AG04450 (cell line): ENCODE measurements at regions of chr17 and their contacts with region 1.

Region 1: DNA sequence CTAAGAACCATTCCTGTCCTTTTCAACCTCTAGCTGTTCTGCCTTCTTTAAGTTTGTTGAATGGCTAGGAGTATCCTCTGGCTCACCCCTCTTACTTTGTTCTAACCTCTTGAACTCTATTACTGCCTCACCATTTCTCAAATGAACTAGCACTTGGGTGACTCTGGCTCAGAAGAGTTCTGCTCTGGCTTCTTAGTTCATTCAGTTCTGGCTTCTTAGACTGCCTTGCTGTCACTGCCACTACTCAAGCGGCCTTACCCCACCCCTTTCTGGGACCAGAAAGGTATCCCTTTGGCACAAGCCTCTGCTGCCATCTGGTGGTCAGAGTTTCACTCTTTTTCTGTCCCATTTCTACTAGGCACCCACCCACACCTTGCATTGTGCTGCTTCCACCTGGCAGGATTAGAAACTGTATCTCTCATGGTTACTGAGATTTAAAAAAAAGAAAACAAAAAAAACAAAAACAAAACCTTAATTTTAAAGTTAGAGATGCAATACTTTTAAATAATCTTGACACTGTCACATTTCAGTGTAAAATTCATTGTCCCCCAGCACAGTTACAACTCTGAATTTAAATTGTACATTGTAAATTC is 6.8 kb upstream of the ABCA10 start:
- DNase-seq: peak; percentile 51
- H3K4me3 ChIP-seq: no peak overlapping the region
- H3K27ac ChIP-seq: no peak overlapping the region
- H3K27me3 ChIP-seq: no peaks in the 10 kb centered on the region
- CTCF ChIP-seq: peak; percentile 82

Region 2: DNA sequence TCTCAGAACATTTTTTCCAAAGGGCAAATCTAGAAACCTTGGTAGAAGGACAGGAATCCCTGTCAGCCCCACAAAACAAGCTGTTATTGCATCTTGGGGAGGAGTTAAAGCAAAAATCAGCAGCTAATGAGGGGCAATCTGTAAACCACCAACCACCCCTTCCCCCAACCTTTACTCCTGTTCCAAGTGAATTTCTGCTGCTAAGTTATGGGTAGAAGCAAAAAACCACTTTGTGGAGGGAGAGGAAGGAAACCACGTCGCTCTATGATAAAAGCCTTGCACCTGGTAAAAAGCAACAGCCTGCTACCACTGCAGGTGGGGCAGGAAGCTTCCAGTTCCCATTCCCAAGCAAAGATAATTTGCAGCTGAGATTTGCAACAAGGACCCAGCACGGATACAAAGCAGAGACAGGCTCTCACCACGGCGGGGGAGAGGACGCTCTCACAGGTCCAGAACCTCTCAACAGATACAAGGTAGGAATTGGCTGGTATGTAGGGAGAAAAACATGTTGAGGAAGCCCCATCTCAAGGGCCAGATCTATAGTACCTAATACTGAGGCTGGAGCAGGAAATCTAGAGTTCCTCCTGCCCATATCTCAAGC is 290.9 kb before region 1 on chr17:
- CTCF ChIA-PET with region 1: no interaction called
- POLR2A ChIA-PET with region 1: no interaction called
- DNase-seq: no peak
- H3K4me3 ChIP-seq: no peak overlapping the region
- H3K27ac ChIP-seq: no peak overlapping the region
- H3K27me3 ChIP-seq: no peaks in the 10 kb centered on the region
- CTCF ChIP-seq: no peak

Region 3: DNA sequence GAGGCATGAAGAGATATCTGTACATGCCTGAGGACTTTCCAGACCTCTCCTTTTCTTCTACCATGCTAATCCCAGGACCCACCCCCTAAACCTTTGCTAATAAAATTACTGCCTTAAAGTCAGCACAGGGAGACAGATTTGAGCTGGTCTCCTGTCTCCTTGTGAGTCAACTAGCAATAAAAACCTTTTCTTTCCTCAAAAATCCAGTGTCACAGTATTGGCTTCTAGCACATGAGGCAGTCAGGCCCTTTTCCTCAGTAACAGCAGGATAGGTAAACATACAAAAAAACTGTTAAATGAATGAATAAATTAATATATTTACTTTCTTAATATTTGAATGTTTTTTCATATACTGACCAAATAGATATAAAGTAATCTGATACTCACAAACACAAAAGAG is 48.1 kb before region 1 on chr17:
- CTCF ChIA-PET with region 1: no interaction called
- POLR2A ChIA-PET with region 1: no interaction called
- DNase-seq: no peak
- H3K4me3 ChIP-seq: no peak overlapping the region
- H3K27ac ChIP-seq: no peak overlapping the region
- H3K27me3 ChIP-seq: no peaks in the 10 kb centered on the region
- CTCF ChIP-seq: no peak

Region 4: GRCh38 chr17:69223809-69224208 is 11.6 kb before region 1 on chr17:
- CTCF ChIA-PET with region 1: interaction called, 12 read pairs
- POLR2A ChIA-PET with region 1: no interaction called
- DNase-seq: peak; percentile 15
- H3K4me3 ChIP-seq: no peak overlapping the region
- H3K27ac ChIP-seq: no peak overlapping the region
- H3K27me3 ChIP-seq: no peaks in the 10 kb centered on the region
- CTCF ChIP-seq: no peak

Region 5: DNA sequence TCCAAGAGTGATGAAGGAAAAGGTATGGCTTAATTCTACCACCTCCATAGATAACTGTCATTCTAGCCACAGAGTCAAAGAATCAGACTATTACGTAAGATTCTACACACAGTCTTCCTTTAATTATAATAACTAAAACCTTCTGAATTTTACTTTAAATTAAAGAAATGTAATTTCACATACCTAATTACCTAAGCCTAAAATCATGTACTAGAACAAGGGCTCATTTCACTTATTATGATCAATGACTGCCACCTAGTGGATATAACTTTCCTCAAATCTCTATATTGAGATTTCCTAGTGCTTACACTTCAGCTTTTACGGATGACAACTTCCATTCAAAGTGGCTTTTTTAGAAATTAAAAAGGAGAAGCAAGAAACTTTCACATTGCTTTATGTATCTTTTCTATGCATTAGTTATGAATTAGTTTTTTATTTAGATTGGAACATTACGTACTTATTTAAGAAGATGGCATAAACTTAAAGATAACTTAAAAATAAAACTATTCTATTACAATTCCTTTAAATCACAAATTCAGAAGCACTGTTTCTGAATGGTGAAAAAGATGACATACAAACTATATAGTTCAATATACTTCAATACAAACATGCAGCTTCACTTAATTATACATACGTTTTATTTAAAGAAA is 11.4 kb after region 1 on chr17:
- CTCF ChIA-PET with region 1: interaction called, 17 read pairs
- POLR2A ChIA-PET with region 1: no interaction called
- DNase-seq: no peak
- H3K4me3 ChIP-seq: no peak overlapping the region
- H3K27ac ChIP-seq: no peak overlapping the region
- H3K27me3 ChIP-seq: no peaks in the 10 kb centered on the region
- CTCF ChIP-seq: peak; percentile 54

Region 6: GRCh38 chr17:69327060-69327831 is 91.8 kb after region 1 on chr17 and contains the start of gene ABCA5:
- CTCF ChIA-PET with region 1: no interaction called
- POLR2A ChIA-PET with region 1: no interaction called
- DNase-seq: peak; percentile 32
- H3K4me3 ChIP-seq: peak within 1 kb of the TSS; percentile 69
- H3K27ac ChIP-seq: no peak within 1 kb of the TSS
- H3K27me3 ChIP-seq: no peaks in the 10 kb centered on the region
- CTCF ChIP-seq: no peak
- polyA plus RNA-seq, gene ABCA5: 5.0 and 8.1 TPM in 2 replicates

Region 7: DNA sequence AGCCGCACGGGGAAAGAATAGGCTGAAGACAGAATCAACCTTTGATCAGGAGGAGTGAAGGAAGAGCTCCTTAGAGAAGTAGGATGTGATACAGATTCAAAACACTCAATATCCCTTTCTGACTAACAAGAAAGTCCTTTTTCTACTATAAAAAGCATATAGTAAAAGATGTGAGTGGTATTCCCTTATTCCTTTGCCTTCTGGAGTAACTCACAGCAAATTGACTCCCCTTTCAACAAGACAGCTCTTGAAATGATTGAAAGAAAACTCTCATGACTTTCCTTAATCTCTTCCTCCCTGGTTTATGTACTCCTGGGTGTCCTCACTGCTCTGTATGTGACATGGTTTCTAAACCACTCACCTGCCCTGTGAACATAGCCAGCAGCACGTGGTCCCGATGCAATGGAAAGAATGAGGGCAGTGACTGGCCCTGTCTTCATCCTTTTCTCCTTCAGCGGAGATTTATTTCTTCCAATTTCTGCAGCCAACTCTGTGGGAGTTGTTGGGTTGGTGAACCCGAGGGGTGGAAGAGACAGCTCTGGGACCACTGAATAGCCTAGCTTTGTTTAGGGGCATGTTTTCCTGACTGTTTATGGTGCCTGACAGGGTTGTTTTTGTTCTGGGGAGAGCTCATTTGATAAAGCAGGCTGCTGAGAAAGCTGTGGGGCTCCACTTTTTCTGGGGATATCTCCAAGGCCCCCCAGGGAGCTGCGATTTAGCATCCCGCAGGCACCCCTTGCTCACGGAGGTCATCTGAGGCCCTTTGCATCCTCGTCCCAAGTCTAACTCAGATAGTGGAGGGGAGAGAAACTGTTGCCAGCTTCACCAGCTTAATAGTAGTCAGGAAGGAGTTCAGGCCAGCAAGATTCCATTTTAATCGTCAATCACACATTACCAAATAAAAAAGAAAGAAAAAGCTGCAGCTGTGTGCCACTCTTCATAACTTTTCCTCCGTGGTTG is 225.8 kb after region 1 on chr17:
- CTCF ChIA-PET with region 1: no interaction called
- POLR2A ChIA-PET with region 1: no interaction called
- DNase-seq: no peak
- H3K4me3 ChIP-seq: no peak overlapping the region
- H3K27ac ChIP-seq: no peak overlapping the region
- H3K27me3 ChIP-seq: no peaks in the 10 kb centered on the region
- CTCF ChIP-seq: no peak